Right ventricle myocardium inferior (tissue), 1 donor: ENCODE measurements at regions of chr22 and their contacts with region 1.

Region 1: GRCh38 chr22:20495861-20496681 is 476 bp upstream of the KLHL22 start:
- DNase-seq: peak; percentile 96
- ATAC-seq: peak; percentile 98

Region 2: DNA sequence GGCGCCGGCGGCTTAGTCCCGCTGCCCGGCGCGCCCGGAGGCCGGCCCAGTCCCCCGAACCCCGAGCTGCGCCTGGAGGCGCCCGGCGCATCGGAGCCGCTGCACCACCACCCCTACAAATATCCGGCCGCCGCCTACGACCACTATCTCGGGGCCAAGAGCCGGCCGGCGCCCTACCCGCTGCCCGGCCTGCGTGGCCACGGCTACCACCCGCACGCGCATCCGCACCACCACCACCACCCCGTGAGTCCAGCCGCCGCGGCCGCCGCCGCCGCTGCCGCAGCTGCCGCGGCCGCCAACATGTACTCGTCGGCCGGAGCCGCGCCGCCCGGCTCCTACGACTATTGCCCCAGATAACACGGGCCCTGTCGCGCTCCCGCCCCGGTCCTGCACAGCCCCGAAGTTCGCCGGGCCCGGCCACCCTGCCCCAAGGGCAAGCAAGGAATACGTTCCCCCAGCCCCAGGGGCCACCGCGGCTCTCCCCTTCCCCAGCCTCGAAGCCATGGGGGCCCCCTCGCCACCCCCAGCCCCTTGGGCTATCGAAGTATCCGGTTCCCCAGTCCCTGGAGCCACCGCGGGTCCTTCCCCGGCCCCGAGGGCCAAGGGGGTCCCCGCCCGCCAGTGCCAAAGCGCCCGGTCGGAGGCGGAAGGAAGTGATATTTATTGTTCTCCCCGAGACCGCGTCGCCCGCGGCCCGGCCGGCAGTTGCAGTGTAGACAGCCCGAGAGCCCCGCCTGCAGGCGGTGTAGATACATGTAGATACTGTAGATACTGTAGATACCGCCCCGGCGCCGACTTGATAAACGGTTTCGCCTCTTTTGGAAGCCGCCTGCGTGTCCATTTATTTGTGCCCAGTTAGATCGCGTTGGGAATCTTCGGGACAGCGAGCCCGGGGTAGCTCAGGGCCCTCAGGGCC is 729.3 kb before region 1 on chr22:
- intact Hi-C with region 1: no loop called
- DNase-seq: peak; percentile 89
- ATAC-seq: peak; percentile 53

Region 3: DNA sequence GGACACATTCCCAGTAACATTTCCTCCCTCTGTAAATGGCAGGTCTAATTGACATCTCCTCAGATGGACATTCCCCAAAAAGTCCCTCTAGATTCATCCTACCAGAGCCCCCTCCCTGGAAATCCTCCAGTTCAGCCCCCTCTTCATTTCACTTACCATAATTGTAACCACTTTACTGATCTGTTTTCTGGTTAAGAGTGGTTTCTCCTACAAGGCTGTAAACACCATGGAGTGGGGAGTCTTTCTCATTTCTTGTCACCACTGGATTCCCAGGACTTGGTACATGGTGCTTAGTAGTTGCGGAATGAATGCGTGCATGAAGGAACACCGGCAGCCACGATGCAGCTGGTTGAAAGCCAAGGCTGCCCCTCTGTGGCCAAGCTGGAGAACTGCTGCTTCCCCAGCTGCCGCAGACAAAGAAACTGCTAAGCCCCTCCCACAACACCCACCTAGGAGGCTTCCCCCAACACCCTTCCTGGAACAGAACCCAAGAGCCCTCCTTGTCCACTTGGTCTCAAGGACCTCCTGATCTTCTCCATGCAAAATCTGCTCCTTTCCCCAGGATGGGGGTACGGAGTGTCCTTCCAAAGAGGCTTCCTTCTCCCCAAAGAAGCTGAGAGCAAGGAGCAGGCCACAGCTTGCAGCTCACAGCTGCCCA is 39.9 kb before region 1 on chr22:
- intact Hi-C with region 1: loop called (anchors 5 kb)
- DNase-seq: peak; percentile 85
- ATAC-seq: peak; percentile 82